ENCODE measurements at regions of chr5 and their contacts with region 1.

Region 1: DNA sequence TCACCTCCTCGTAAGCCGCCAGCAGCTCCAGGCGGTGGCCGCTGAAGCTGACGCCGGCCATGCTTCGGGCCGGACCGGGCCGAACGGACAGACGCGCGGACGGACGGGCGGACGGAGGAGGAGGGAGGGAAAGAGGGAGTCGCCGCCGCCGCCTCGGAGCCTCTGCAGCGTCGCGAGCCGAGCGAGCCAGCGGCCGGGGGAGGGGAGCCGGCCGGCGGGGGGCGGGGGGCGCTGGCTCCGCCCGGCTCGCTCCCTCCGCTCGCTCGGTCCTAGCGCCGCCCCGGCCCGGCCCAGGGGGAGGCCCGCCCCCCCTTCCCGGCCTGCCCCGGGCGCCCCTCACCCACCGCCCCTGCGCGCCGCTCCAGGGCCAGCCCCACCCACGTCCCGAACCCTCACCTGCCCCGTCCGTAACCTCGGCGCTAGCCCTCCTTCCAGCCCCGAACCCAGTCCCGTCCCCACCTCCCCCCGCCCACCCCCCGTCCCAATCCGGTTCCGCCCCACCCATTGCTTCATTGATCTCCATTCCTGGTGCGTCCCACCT is at the start of gene DBN1:
- DNase-seq: no peak
- ATAC-seq: peak; percentile 63
- H3K4me3 ChIP-seq: peak within 1 kb of the TSS; percentile 97
- H3K27ac ChIP-seq: peak within 1 kb of the TSS; percentile 93
- H3K4me1 ChIP-seq: peaks cover 45% of the 10 kb centered on the region
- H3K27me3 ChIP-seq: no peaks in the 10 kb centered on the region
- CTCF ChIP-seq: no peak
- POLR2A ChIP-seq: 0 out of 2 replicates have a peak, but pooled peaks have one; percentile 10
- RAD21 ChIP-seq: no peak
- total RNA-seq, gene DBN1: 122 and 212 TPM in 2 replicates

Region 2: GRCh38 chr5:177354711-177355110 is 118.8 kb before region 1 on chr5:
- CTCF ChIA-PET with region 1: interaction called, 10 read pairs
- POLR2A ChIA-PET with region 1: interaction called, 3 read pairs
- dilution Hi-C with region 1: no loop called
- in situ Hi-C with region 1: no loop called
- intact Hi-C with region 1: no loop called
- DNase-seq: no peak
- ATAC-seq: no peak
- H3K4me3 ChIP-seq: no peak overlapping the region
- H3K27ac ChIP-seq: no peak overlapping the region
- H3K4me1 ChIP-seq: peaks cover 12% of the 10 kb centered on the region
- H3K27me3 ChIP-seq: peaks cover 13% of the 10 kb centered on the region; the same call in 1 of the 2 replicates
- CTCF ChIP-seq: no peak
- POLR2A ChIP-seq: no peak
- RAD21 ChIP-seq: no peak